Activated T-helper 1 cell treated with anti-CD3 and anti-CD28 coated beads, Interleukin-12 subunit alpha, Interleukin-12 subunit beta, Interleukin-2, Interleukin-4 antibody, amounts not matched to agents 30 ng/mL and 10 ng/mL and 1 ng/mL, durations not matched to agents 14 hours and 24 hours and 36 hours (primary cell): ENCODE measurements at regions of chr2 and their contacts with region 1.

Region 1: DNA sequence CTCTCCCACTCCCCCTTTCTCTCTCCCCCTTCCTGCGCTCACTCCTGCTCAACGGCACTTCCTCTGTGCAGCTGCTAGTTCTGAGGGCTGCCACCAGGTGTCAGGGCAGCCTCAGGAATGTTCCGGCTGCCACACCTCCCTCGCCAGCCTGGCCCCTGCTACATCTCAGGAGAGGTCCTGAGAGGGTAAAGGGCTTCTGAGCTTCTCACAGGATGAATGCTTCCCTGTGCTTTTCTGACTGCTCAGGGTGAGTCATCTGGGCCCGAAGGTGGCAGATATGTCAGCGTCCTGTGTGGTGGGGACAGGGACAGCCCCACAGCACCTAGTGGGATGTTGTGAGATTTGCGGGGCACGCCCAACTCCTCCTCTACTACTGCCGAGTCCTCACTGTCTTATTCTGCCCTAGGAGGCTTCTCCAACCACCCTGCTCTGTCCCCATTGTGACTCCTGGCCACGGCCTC is 49.0 kb downstream of the PLEKHB2 start:
- DNase-seq: peak; percentile 58
- H3K4me3 Mint-ChIP-seq: no peak overlapping the region
- H3K27ac Mint-ChIP-seq: no peak overlapping the region
- H3K4me1 Mint-ChIP-seq: peaks cover 32% of the 10 kb centered on the region
- H3K27me3 Mint-ChIP-seq: no peaks in the 10 kb centered on the region

Region 2: DNA sequence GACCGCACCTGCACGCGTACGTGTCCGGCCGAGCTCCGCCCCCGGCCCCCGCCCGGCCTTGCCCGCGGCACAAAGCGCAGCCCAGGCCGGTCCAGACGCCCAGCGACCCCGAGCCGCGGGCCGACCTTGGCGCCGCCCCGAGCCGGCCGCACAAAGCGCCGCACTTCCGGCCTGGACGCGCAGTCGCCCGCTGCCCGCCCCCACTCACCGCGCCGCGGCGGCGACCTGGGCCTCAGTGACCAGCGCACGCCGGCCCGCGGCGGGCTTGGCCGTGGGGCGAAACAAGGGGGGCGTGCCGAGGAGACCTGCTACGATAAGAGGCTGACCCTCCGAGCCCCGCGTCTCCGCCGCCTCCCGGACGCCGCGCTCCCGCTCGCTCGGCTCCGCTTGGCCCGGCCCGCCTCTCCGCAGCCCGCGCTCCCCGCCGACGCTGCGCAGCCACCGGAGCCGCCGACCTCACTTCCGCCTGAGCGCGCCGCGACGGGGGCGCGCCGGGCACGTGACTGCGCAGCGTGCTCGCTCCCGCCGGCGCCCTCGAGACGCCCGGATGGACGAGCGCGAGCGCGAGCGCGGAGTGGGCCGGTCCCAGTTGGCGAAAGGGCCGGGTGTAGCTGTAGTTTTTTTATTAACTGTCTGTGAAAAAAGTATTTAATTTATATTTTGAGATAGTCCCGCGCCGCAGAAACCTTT is 61.0 kb before region 1 on chr2 and contains the start of gene FAM168B:
- intact Hi-C with region 1: loop called (anchors 1 kb)
- DNase-seq: peak; percentile 89
- H3K4me3 Mint-ChIP-seq: peak within 1 kb of the TSS; percentile 93
- H3K27ac Mint-ChIP-seq: peak within 1 kb of the TSS; percentile 95
- H3K4me1 Mint-ChIP-seq: peaks cover 18% of the 10 kb centered on the region
- H3K27me3 Mint-ChIP-seq: no peaks in the 10 kb centered on the region
- total RNA-seq, gene FAM168B: 79.0 and 79.1 TPM in 2 replicates

Region 3: GRCh38 chr2:131492418-131493198 is 338.5 kb after region 1 on chr2:
- intact Hi-C with region 1: loop called (anchors 1 kb)
- DNase-seq: peak; percentile 89
- H3K4me3 Mint-ChIP-seq: peak overlapping the region; percentile 98
- H3K27ac Mint-ChIP-seq: peak overlapping the region; percentile 97
- H3K4me1 Mint-ChIP-seq: peaks cover 18% of the 10 kb centered on the region
- H3K27me3 Mint-ChIP-seq: no peaks in the 10 kb centered on the region

Region 4: DNA sequence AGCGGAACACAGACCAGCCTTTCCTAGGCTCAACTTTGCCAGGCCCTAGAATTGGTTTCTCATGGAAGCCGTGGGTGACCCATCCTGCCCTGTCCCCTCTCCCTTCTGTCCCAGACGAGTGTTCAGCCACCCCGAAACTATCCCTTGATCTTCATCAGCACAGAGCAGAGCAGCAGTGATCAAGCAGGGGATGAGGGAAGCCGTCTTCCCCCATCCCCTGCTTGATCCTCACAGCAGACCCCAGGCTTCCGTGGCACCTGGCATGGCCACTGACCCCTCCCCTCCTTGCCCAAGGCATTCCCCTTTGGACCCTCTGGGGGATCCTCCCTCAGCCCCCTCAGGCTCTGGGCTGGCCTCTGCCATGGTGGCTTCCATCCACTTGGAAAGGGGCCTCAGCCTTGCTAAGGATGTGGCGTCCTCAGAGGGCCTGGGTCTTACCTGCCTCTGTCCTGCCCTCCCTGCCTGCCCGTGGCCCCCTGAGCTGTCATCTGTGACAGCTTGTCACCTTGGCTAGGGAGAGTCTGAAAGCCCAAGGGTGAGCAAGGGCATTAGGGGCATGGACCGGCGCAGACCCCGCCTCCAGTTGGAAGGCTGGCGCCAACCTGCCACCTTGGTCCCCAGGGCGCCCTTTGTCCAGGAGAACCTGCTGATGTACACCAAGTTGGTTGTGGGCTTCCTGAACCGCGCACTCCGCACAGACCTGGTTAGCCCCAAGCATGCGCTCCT is 363.2 kb after region 1 on chr2:
- intact Hi-C with region 1: no loop called
- DNase-seq: no peak
- H3K4me3 Mint-ChIP-seq: no peak overlapping the region
- H3K27ac Mint-ChIP-seq: peak overlapping the region; percentile 18
- H3K4me1 Mint-ChIP-seq: peaks cover 8% of the 10 kb centered on the region
- H3K27me3 Mint-ChIP-seq: no peaks in the 10 kb centered on the region

Region 5: DNA sequence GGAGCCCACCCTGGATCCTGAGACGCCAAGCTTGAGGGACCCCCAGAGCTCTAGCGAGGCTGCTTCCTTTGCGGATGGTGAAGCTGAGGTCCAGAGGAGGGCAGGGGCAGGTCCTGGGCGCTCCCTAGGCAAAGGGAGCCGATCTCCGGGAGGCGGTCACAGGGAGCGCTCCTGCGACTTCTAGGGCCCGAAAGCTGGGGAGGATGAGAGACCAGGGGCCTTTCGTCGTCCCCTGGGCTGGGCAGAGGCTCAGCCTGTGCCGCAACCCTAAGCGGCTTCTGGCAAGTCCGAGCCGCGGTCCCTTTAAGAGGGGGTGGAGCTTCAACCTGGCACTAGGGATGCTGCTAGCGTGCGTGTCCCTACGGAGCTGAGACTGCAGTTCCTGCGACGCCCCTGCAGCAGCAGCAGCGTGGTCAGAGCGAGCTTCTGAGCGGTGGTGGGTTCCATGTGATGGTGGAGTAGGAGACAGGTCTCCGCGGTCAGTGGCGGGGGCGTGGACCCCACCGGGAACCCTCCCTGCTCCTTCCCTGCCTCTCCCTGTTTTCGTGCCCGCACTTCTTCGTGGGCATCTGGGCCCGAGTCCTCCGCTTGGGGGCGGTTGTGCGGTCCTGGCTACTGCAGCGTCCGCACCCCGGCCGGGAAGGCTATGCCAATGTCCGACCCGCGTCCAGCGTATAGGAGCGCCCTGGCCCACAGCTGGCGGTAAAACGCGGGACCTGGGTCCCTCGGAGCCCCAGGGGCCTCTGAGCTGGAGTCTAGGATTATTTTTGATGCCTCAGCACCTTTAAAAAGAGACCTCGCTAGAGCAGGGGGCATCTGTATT is 528.2 kb after region 1 on chr2:
- intact Hi-C with region 1: loop called (anchors 1 kb)
- DNase-seq: peak; percentile 66
- H3K4me3 Mint-ChIP-seq: peak overlapping the region; percentile 90
- H3K27ac Mint-ChIP-seq: peak overlapping the region; percentile 76
- H3K4me1 Mint-ChIP-seq: peaks cover 42% of the 10 kb centered on the region
- H3K27me3 Mint-ChIP-seq: peaks cover 2% of the 10 kb centered on the region